Heart right ventricle (tissue), 16 donors: ENCODE measurements at regions of chr15 and their contacts with region 1.

Region 1: DNA sequence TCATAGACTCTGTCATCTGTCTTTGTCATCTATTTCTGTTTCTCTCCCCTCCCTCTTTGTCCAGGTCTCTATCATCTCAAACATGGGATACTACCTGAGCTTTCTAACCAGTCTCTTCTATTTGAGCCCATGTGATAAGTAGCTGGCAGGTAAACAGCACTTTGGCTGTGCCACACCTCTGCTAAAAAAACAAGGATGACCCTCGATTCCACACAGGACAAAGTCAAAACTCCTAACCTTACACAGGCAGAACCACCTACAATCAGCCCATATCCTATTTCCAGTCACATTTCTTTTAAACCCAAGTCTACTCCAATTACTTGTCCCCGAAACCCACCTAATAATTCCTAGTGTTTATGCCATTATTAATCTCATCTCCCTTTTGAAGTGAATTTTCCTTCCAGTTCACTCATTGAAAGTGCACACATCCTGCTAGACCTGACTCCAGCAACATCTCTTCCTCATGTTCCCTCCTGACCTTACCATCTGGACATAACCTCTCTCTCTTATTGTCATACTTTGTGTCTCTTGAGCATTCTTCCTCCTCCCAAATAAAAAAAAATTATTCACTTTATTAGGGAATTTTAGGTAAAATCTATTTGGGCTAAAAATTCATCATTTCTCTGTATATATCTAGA is 256.1 kb upstream of the ONECUT1 start:
- DNase-seq: no peak
- ATAC-seq: no peak
- H3K4me3 ChIP-seq: no peak overlapping the region
- H3K27ac ChIP-seq: no peak overlapping the region
- H3K4me1 ChIP-seq: no peaks in the 10 kb centered on the region
- H3K27me3 ChIP-seq: no peaks in the 10 kb centered on the region
- CTCF ChIP-seq: no peak

Region 2: DNA sequence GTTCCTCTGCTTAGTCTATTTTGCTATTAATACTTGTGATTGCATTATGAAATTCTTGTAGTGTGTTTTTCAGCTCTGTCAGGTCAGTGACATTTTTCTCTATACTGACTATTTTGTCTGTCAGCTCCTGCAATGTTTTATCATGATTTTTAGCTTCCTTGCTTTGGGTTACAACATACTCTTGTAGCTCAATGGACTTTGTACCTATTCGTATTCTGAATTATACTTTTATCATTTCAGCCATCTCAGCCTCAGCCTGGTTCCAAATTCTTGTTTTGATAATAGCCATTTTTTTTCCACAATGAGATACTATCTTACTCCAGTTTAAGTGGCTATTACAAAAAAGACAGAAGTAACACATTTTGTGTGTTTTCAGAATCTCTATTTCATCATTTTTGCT is 52.0 kb before region 1 on chr15:
- intact Hi-C with region 1: loop called in 1 of 10 experiments (anchors 10 kb)
- DNase-seq: no peak
- ATAC-seq: no peak
- H3K4me3 ChIP-seq: no peak overlapping the region
- H3K27ac ChIP-seq: no peak overlapping the region
- H3K4me1 ChIP-seq: no peaks in the 10 kb centered on the region
- H3K27me3 ChIP-seq: no peaks in the 10 kb centered on the region
- CTCF ChIP-seq: no peak

Region 3: GRCh38 chr15:53102483-53102882 is 56.2 kb after region 1 on chr15:
- intact Hi-C with region 1: no loop called
- DNase-seq: no peak
- ATAC-seq: no peak
- H3K4me3 ChIP-seq: no peak overlapping the region
- H3K27ac ChIP-seq: no peak overlapping the region
- H3K4me1 ChIP-seq: no peaks in the 10 kb centered on the region
- H3K27me3 ChIP-seq: no peaks in the 10 kb centered on the region
- CTCF ChIP-seq: no peak